MCF 10A (cell line): ENCODE measurements at regions of chr2 and their contacts with region 1.

Region 1: DNA sequence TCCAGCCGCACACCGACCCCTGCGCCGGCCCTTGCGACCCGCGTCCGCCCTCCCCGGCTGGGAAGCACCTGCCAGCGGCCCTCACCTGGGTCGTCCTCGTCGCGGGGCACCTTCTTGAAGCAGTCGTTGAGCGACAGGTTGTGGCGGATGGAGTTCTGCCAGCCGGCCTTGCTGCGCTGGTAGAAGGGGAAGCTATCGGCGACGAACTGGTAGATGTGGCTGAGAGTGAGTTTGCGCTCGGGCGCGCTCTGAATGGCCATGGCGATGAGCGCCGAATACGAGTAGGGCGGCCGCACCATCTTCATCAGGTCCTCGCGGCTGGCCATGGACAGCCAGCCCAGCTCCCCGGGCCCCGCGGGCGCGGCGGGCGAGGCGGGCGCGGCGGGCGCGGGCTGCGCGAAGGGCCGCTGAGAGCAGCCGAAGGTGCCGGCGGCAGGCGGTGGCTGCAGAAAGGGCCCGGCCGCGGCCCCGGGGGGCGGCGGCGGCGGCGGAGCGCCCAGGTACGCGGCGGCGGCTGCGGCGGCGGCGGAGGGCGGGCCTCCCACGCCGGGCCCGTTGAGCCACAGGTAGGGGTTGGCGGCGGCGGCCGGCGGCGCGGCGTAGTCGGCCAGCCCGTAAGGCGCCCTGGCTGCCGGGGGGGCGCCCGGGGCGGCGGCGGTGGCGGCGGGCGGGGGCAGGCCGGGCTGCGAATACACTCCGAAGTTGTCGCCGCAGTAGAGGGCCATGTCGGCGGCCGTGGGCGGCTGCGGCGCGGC is 505 bp downstream of the FOXI3 start:
- DNase-seq: no peak
- H3K4me3 Mint-ChIP-seq: peak overlapping the region; percentile 58
- H3K27ac Mint-ChIP-seq: no peak overlapping the region
- H3K4me1 Mint-ChIP-seq: no peaks in the 10 kb centered on the region
- H3K27me3 Mint-ChIP-seq: peaks cover 59% of the 10 kb centered on the region
- CTCF ChIP-seq: no peak

Region 2: GRCh38 chr2:88199912-88200682 is 251.9 kb before region 1 on chr2:
- CTCF ChIA-PET with region 1: interaction called, 18 read pairs
- POLR2A ChIA-PET with region 1: no interaction called
- intact Hi-C with region 1: no loop called
- DNase-seq: peak; percentile 35
- H3K4me3 Mint-ChIP-seq: peak overlapping the region; percentile 53
- H3K27ac Mint-ChIP-seq: no peak overlapping the region
- H3K4me1 Mint-ChIP-seq: peaks cover 10% of the 10 kb centered on the region
- H3K27me3 Mint-ChIP-seq: peaks cover 31% of the 10 kb centered on the region
- CTCF ChIP-seq: no peak

Region 3: GRCh38 chr2:88212251-88212790 is 239.7 kb before region 1 on chr2:
- CTCF ChIA-PET with region 1: interaction called, 13 read pairs
- POLR2A ChIA-PET with region 1: no interaction called
- intact Hi-C with region 1: no loop called
- DNase-seq: peak; percentile 42
- H3K4me3 Mint-ChIP-seq: no peak overlapping the region
- H3K27ac Mint-ChIP-seq: no peak overlapping the region
- H3K4me1 Mint-ChIP-seq: no peaks in the 10 kb centered on the region
- H3K27me3 Mint-ChIP-seq: peaks cover 23% of the 10 kb centered on the region
- CTCF ChIP-seq: peak; percentile 32